Activated T-helper 1 cell treated with anti-CD3 and anti-CD28 coated beads, Interleukin-12 subunit alpha, Interleukin-12 subunit beta, Interleukin-2, Interleukin-4 antibody, amounts not matched to agents 30 ng/mL and 10 ng/mL and 1 ng/mL, durations not matched to agents 14 hours and 24 hours and 36 hours (primary cell): ENCODE measurements at regions of chr5 and their contacts with region 1.

Region 1: GRCh38 chr5:141992349-141992963 is 20.4 kb downstream of the GNPDA1 start:
- DNase-seq: peak; percentile 53
- H3K4me3 Mint-ChIP-seq: no peak overlapping the region
- H3K27ac Mint-ChIP-seq: no peak overlapping the region
- H3K4me1 Mint-ChIP-seq: peaks cover 18% of the 10 kb centered on the region
- H3K27me3 Mint-ChIP-seq: no peaks in the 10 kb centered on the region

Region 2: GRCh38 chr5:141968914-141969608 is 23.4 kb before region 1 on chr5 and contains the start of gene RNF14:
- intact Hi-C with region 1: loop called (anchors 2 kb)
- DNase-seq: peak; percentile 95
- H3K4me3 Mint-ChIP-seq: peak within 1 kb of the TSS; percentile 92
- H3K27ac Mint-ChIP-seq: peak within 1 kb of the TSS; percentile 93
- H3K4me1 Mint-ChIP-seq: peaks cover 26% of the 10 kb centered on the region
- H3K27me3 Mint-ChIP-seq: no peaks in the 10 kb centered on the region
- total RNA-seq, gene RNF14: 26.4 and 28.7 TPM in 2 replicates

Region 3: DNA sequence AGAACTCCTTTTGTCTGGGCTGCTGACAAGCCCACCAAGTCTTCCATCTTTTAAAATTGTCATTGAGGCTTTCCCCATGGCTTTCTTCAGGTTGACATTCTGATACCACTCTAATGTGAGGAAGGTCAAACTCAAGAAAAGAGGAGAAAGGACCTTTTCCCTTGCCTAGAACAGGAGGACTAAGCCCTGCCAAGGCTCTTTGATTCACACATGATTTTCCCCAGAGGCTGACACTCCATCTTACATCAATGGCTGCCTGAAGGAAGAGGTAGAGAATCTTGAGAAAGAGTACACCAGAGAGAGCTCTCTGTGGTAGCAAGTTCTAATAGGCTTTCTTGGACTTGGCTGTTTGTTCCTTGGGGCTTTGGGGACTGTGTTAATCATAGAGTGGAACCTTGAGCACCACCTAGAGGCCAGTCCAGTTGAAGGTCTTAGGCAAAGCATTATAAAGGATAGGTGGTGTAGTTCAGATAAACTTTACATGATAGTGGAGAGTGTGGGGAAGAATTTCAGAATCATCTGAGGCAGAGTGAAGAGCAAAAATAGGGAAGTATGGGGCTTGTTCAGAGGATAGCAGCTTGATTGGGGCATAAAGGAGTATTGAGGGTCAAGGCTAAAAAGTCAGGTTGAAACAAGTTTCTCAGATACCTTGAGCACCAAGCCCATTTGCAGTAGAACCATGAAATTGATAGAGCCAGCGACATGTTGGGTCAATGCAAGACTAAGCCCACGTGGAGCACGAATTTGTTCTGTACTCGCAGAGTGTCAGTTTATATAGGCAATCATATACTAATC is 152.8 kb after region 1 on chr5:
- intact Hi-C with region 1: loop called (anchors 1 kb)
- DNase-seq: peak; percentile 26
- H3K4me3 Mint-ChIP-seq: no peak overlapping the region
- H3K27ac Mint-ChIP-seq: no peak overlapping the region
- H3K4me1 Mint-ChIP-seq: peaks cover 6% of the 10 kb centered on the region
- H3K27me3 Mint-ChIP-seq: no peaks in the 10 kb centered on the region

Region 4: DNA sequence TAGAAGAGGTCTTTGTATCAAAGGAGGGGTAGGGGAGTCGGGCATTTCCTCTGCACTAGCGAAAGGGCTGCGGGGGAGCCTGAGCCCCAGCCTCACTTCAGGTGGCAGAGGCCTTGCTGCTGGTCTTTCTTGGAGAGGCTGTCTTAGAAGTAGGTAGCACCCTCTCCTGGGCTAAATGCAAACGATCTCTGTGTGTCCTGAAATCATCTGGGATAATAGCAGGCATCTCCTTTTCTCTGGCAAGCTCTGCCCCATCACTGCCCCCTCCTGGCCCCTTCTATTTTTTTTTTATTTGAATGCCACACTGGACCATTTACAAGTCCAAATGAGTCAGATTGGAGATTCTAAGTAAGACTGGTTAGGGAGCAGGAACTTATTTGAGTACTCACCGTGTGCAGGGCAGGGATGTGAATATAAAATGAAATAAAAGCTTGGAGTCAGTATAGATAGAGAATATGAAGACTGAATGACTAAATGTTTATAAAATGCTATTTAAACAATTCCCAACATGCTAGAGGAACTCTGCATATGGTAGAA is 556.4 kb after region 1 on chr5:
- intact Hi-C with region 1: loop called (anchors 2 kb)
- DNase-seq: no peak
- H3K4me3 Mint-ChIP-seq: no peak overlapping the region
- H3K27ac Mint-ChIP-seq: no peak overlapping the region
- H3K4me1 Mint-ChIP-seq: peaks cover 6% of the 10 kb centered on the region
- H3K27me3 Mint-ChIP-seq: peaks cover 37% of the 10 kb centered on the region